ENCODE measurements at regions of chr6 and their contacts with region 1.

Region 1: DNA sequence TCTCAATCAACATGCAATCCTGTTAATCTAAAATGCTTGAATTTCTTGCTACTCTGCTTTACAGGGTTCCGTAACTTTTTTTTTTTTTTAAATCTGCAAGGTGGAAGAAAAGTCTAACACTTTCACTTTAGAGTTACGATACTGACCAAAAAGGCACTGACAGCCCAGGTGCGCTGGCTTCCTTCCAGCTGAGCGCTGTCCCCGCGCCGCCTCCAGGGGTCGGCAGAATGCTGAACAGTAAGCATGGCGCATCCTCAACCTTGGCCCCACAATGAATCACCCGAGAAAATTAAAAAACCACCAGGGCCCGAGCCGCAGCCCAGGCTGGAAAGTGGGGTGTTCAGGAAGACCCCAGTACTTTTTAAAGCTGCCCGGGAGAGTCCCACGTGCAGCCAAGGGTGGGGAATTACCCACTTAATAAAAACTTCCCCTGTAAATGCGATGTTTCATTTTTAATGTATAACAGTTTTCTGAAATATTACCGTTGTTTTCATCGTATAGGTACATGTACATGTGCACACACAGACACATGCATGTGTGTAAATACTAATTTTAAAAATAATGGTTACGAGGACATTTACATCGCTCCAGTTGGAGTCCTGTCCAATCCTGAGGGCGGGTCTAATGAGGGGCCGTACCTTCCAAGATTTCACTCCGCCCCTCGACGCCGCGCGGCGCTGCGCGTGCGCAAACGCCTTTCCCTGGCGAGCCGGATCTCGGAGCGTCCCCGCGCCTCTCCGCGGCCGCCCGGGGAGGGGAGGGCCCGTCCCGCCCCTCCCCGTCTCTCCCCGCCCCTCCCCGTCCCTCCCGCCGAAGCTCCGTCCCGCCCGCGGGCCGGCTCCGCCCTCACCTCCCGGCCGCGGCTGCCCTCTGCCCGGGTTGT is at the start of gene GINM1:
- DNase-seq: peak; percentile 95 to 99
- ATAC-seq: peak; percentile 98
- H3K4me3 ChIP-seq: peak within 1 kb of the TSS; percentile 89 to 96
- H3K27ac ChIP-seq: peak within 1 kb of the TSS; percentile 64 to 89
- H3K4me1 ChIP-seq: peaks cover 1 to 3% of the 10 kb centered on the region in 2 donors
- H3K27me3 ChIP-seq: no peaks in the 10 kb centered on the region
- total RNA-seq, gene GINM1: 67.2 to 68.1 TPM

Region 2: DNA sequence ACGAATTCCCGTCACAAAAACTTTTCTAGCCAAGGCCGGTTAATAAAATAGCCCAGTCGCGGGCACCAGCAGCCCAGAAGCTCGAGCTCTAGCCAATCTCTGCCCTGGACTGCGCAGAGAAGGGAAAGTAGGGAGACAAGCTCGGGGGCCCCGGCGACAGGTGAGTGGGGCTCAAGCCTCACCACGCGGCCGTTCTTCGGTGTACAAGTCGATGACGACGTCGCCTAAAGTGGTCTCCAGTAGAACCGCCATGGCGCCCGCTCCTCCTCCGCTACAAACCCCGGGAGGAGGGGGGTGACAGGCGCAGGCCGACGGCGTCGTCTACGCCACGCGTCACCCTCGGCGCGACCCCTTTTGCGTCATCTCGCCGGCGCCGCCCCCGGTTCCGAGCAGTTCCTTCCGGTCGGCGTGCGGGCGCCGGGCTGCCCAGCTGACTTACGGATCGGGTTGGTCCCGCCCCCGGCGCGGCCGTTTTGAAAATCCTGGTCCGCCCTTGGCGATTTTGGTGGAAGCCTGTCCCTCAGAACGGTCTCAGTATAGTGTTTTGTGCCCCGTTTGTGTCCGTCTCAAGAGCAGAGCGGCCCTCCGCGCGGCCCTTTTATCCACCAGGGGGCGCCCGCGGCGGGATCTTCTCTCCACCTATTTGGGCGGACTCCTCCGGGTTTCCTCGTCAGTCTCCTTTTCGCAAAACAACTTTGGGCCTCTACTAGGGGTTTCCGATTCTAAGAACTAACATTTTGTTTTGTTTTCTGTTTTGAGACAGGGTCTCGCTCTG is 19.8 kb before region 1 on chr6 and contains the start of gene PPIL4:
- intact Hi-C with region 1: loop called in 1 of 2 experiments (anchors 2 kb)
- DNase-seq: peak; percentile 98 to 99
- ATAC-seq: peak; percentile 99
- H3K4me3 ChIP-seq: peak within 1 kb of the TSS; percentile 61 to 85
- H3K27ac ChIP-seq: peak within 1 kb of the TSS; percentile 79 to 82
- H3K4me1 ChIP-seq: peaks cover 0 to 2% of the 10 kb centered on the region in 2 donors
- H3K27me3 ChIP-seq: no peaks in the 10 kb centered on the region
- total RNA-seq, gene PPIL4: 30.7 to 34.4 TPM

Region 3: GRCh38 chr6:149925974-149926777 is 360.4 kb after region 1 on chr6:
- intact Hi-C with region 1: loop called in 1 of 2 experiments (anchors 10 kb)
- DNase-seq: peak; percentile 94 to 97
- ATAC-seq: peak; percentile 93
- H3K4me3 ChIP-seq: peak overlapping the region; percentile 0 to 36
- H3K27ac ChIP-seq: no peak overlapping the region
- H3K4me1 ChIP-seq: no peaks in the 10 kb centered on the region
- H3K27me3 ChIP-seq: no peaks in the 10 kb centered on the region